ENCODE measurements at regions of chr1 and their contacts with region 1.

Region 1: GRCh38 chr1:23484253-23485001 is 448 bp upstream of the ASAP3 start:
- DNase-seq: peak; percentile 98
- H3K4me3 ChIP-seq: peak overlapping the region; percentile 89 to 99 (median 98)
- H3K27ac ChIP-seq: peak overlapping the region; percentile 95 to 99 (median 96)
- H3K4me1 ChIP-seq: peaks cover 33 to 53% (median 51%) of the 10 kb centered on the region in 4 donors
- H3K27me3 ChIP-seq: no peaks in the 10 kb centered on the region
- CTCF ChIP-seq: no peak
- EP300 ChIP-seq: no peak
- POLR2A ChIP-seq: no peak

Region 2: DNA sequence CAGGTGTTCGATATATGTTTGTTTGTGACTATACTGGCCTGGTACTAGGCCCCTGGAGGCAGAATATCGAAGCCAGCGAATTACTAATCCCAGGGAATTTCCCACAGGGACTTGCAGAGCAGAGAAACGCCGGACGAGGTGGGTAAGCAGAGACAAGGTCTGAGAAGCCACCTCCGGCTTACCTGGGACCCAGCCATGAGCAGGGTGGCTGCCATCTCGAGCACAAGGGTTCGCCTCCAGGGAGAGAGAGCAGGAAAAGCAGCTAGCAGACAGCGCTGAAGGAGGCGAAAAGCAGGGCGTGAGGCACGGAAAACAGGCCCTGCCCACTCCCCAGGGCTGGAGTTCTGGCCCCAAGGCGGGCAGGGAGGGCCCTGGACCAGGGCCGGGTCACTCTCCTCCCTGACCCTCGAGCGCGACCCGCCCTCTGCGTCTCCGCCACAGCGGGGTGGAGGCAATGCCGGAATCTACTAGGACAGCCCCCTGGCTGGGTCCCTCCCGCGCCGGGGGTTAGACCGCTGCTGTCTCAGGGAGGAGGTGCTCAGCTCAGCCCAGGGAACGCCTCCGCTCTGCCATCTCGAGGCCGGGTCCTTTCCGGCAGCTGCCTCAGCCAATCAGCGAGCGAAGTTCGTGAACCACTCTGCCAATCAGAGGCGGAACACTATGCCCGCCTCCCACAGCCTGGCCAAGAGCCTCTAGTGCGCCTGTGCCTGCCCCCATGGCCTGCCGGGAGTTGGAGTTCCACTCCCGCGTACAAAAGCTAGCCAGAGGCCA is 116.5 kb before region 1 on chr1:
- intact Hi-C with region 1: loop called (anchors 10 kb)
- DNase-seq: peak; percentile 99
- H3K4me3 ChIP-seq: peak overlapping the region; percentile 70 to 84 (median 80)
- H3K27ac ChIP-seq: peak overlapping the region; percentile 90 to 99 (median 96)
- H3K4me1 ChIP-seq: peaks cover 37 to 60% (median 52%) of the 10 kb centered on the region in 4 donors
- H3K27me3 ChIP-seq: no peaks in the 10 kb centered on the region
- CTCF ChIP-seq: peak in 1 of 3 experiments; percentile 9
- EP300 ChIP-seq: no peak
- POLR2A ChIP-seq: peak; percentile 59

Region 3: DNA sequence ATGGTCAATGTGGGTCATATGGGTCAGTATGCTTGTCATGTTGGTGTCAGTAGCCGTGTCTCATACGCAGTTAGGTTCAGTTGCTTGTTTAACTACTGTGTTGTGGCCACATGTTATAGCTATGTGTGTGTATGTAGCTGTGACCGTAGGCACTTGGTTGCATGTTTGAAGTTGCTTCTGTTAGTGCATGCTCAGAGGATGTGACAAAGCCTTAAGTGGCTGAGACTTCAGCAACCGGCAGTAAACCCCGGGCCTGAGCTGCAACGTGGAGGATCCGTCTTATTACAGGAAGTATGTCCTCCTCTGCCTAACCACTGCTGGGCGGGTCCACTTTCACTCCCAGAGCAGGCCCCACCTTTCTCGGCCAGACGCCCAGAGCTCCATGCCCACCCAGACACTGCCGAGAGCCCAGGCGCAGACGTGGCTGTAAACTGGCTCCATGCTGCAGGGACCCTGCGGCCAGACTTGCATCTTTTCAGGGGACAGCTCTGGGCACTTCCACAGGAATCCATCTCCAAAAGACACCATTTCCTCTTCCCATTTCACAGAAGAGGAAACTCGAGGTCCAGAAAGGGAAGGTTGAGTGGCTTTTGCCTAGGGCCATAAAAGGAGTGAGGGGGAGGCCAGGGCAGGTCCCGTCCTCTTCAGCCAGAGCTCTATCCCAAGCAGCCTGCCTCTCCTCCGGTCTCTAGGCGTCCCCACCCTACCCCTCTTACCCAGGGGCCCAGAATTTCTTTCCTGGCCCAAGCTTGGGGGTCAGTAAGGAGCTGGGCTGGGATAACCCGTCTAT is 62.0 kb before region 1 on chr1:
- intact Hi-C with region 1: loop called (anchors 10 kb)
- DNase-seq: no peak
- H3K4me3 ChIP-seq: peak overlapping the region; percentile 12 to 77 (median 42)
- H3K27ac ChIP-seq: peak overlapping the region; percentile 81 to 89 (median 85)
- H3K4me1 ChIP-seq: peaks cover 43 to 63% (median 53%) of the 10 kb centered on the region in 4 donors
- H3K27me3 ChIP-seq: no peaks in the 10 kb centered on the region
- CTCF ChIP-seq: no peak
- EP300 ChIP-seq: no peak
- POLR2A ChIP-seq: no peak

Measured in esophagus muscularis mucosa (tissue), 4 donors.